ENCODE measurements at regions of chr10 and their contacts with region 1.

Region 1: DNA sequence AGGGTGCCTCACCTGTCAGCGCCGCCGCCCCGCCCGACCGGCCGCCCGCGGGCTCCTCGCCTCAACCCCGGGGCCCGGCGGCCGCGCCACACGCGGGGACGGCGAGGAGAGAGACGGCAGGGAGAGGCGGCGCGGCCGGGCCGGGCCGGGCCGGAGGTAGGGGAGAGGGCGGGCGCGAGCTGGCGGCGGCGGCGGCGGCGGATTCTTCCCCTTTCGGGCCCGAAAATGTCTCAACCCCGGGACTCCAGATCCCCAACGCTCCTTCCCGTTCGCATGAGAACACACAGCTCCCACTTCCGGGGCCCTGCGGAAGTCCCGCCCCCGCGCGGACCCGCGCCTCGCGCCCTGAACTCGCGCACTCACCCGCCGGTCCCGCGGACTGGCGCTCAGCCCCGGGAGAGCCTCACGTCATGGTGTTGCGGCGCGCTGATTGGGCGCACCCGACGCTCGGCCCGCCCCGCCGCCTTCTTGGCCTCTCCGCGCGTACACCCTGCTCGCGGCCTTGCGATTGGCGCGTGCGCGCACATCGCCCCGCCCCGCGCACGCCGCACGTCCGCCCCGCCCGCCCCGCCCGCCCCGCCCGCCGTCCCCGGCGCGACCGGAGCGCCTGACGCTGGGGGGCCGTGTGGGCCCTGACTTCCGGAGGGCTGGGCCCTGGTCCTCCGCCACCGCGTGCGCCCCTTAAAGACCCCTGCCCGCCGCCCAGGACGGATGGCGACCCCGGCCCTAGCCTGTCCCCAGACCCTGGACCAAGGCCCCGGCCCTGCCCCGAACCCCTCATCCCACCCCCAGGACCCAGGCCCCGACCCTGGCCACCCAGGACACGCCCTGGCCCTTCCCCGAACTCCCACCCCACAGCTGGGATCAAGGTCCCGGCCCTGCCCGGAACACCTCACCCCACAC is at the start of gene LARP4B:
- DNase-seq: peak; percentile 94 to 100 (median 97)

Region 2: GRCh38 chr10:828191-828590 is 103.5 kb before region 1 on chr10:
- intact Hi-C with region 1: no loop called
- DNase-seq: no peak

Region 3: GRCh38 chr10:987870-988666 is 56.4 kb after region 1 on chr10 and contains the start of gene GTPBP4:
- intact Hi-C with region 1: loop called (anchors 2 kb)
- DNase-seq: peak; percentile 95 to 100 (median 98)

Region 4: GRCh38 chr10:1048732-1049424 is 117.2 kb after region 1 on chr10 and contains the start of gene IDI1:
- intact Hi-C with region 1: loop called (anchors 2 kb)
- DNase-seq: peak; percentile 94 to 100 (median 98)

Region 5: DNA sequence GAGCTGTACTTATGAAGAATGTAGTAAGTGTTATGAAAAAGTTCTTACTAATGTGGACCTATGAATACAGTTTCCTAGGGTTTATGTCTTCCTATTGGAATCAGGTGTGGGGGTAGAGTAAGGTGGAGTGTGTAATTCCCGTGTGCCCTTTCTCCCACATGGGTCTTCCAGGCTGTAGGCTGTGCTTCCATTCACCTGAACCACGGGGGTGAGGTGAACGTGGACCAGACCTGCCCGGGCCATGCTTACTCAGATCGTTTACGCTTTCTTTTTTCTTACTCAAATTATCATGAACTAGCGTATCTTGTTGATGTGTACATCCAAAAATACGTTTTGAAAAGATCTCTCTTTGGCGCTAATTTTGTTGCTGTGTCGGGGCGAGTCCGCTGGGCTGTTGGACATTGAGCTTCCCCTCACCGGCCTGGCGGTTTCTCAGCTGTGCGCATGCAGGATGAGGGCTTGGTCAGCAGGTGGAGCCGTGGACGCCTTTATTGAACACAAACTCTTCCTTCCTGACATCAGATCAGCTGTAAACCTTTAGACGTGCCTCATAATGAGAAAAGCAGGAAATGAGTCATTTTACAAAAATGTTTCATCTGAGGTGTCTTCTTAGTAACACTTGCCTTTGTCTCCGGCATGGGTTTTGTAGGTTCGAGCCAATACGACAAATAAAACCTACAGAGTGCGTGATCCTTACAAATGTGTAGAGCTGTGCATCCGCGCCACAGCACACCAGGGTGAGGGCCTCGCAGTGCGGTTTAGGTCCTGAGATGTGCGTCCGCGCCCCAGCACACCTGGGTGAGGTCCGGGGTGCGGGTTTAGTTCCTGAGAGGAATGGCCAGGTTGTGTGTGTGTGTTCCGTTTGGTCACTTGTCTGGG is 178.4 kb after region 1 on chr10:
- intact Hi-C with region 1: no loop called
- DNase-seq: peak; percentile 43 to 95 (median 74)